Activated CD4-positive, alpha-beta T cell treated with anti-CD3 and anti-CD28 coated beads, Interleukin-2, amount 10 ng/mL, durations not matched to agents 24 days and 14 days (primary cell): ENCODE measurements at regions of chr17 and their contacts with region 1.

Region 1: DNA sequence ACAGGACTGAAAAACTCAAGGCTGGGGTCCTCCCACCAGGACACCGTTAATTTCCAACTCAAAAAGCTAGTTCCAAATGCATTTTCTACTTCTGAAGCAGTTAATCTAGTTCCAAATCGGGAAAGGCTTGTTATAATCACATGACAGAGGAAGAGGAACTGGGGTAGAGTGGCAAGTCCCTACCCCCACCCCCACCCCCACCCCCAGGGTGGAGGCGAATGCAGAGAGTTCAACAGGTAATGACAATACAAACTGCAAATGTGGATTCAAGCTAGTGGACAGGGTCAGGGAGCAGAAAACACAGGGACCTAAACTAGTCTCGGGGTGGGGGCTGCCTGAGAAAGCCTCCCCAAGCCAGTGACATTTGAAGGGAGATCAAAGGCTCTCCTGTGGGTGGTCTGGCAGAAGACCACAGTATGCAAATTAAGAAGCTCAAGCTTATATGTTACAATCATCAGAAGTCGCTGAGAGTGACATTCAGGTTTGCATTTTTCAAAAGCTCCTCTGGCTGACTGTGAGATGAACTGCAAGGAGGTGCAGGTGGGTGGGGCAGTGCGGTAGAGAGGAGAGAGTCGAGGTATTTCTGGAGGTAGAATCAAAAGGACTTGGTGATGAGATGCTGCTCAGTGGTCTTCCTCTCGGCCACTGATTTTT is 56.4 kb upstream of the SLC25A19 start:
- DNase-seq: peak; percentile 80
- H3K4me3 Mint-ChIP-seq: peak overlapping the region; percentile 73
- H3K27ac Mint-ChIP-seq: peak overlapping the region; percentile 88
- H3K4me1 Mint-ChIP-seq: peaks cover 81% of the 10 kb centered on the region
- H3K27me3 Mint-ChIP-seq: no peaks in the 10 kb centered on the region

Region 2: DNA sequence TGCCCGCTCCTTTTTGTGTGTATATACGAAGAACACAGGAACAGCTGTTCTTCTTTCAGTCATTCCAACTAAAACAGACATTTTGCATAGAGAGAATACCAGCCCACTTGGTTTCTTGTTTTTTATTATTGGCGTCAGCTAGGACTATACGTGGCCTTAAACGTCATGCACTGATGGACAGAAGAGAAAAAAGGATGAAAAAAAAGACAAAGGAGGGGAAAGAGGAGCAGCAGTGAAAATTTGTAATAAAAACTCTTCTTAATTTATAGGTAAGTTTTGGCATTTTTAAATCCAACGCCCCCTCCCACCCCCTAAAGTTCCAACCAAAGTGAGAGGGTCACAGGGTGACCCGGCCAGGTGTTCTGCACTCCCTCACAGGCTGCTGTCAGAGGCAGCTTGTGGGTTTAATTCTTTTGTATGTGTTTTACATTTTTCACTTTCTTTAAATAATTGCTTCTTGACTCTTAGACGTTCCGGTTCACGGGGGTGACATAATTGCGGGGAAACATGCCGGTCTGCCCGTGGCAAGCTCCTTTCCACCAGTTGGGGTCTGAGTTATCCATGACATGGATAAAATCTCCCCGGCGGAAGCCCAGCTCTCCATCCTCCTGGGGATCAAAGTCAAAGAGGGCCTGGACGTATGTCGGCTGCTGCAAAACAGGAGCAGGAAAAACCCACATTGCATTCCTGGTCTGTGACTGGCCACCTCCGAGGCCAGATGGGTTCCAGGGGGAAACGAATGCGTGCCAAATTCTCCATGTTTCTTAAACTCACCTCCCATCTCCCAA is 25.5 kb before region 1 on chr17:
- intact Hi-C with region 1: loop called (anchors 2 kb)
- DNase-seq: no peak
- H3K4me3 Mint-ChIP-seq: no peak overlapping the region
- H3K27ac Mint-ChIP-seq: no peak overlapping the region
- H3K4me1 Mint-ChIP-seq: peaks cover 14% of the 10 kb centered on the region
- H3K27me3 Mint-ChIP-seq: no peaks in the 10 kb centered on the region

Region 3: DNA sequence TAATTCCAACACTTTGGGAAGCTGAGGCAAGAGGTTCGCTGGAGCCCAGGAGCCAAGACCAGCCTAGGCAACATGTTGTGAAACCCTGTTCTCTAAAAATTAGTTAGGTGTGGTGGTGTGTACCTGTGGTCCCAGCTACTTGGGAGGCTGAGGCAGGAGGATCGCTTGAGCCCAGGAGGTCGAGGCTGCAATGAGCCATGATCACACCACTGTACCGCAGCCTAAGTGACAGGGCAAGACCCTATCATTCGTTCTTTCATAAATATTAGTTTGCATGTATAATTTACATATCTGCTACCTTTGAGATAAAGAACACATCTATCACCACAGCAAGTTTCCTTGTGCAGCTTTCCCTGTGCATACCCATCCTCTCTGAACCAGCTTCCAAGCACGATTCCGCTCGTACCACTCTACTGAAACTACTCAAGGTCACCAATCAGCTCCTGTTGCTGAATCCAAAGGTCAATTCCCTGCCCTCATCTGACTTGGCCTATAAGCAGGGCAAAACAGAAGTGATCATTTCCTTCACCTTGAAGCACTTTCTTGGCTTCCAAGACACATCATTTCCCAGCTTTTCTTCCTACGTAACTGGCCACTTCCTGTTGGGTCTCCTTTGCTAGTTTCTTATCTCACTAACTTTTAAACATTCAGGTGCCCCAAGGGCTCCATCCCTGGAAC is 10.8 kb after region 1 on chr17:
- intact Hi-C with region 1: no loop called
- DNase-seq: no peak
- H3K4me3 Mint-ChIP-seq: peak overlapping the region; percentile 7
- H3K27ac Mint-ChIP-seq: peak overlapping the region; percentile 42
- H3K4me1 Mint-ChIP-seq: peaks cover 45% of the 10 kb centered on the region
- H3K27me3 Mint-ChIP-seq: no peaks in the 10 kb centered on the region

Region 4: DNA sequence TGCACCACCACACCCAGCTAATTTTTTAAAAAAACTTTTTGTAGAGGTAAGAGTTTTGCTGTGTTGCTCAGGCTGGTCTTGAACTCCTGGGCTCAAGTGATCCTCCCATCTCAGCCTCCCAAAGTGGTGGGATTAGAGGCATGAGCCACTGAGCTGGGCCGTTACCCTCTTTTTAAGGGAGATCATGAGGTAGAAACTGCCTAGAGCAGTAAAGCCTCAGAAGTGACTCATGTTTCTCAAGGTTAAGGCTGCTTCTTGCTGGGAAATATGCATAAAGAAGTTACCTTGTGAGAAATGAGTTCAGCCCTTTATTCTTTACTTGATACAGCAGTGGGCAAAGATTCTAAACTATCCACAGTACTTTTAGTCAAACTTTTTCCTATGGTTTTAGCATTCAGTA is 21.7 kb after region 1 on chr17:
- intact Hi-C with region 1: loop called (anchors 2 kb)
- DNase-seq: no peak
- H3K4me3 Mint-ChIP-seq: peak overlapping the region; percentile 28
- H3K27ac Mint-ChIP-seq: peak overlapping the region; percentile 59
- H3K4me1 Mint-ChIP-seq: peaks cover 80% of the 10 kb centered on the region
- H3K27me3 Mint-ChIP-seq: no peaks in the 10 kb centered on the region

Region 5: GRCh38 chr17:75393523-75394331 is 48.1 kb after region 1 on chr17:
- intact Hi-C with region 1: loop called (anchors 2 kb)
- DNase-seq: peak; percentile 94
- H3K4me3 Mint-ChIP-seq: peak overlapping the region; percentile 99
- H3K27ac Mint-ChIP-seq: peak overlapping the region; percentile 90
- H3K4me1 Mint-ChIP-seq: peaks cover 68% of the 10 kb centered on the region
- H3K27me3 Mint-ChIP-seq: no peaks in the 10 kb centered on the region